A673 (cell line): ENCODE measurements at regions of chr22 and their contacts with region 1.

Region 1: DNA sequence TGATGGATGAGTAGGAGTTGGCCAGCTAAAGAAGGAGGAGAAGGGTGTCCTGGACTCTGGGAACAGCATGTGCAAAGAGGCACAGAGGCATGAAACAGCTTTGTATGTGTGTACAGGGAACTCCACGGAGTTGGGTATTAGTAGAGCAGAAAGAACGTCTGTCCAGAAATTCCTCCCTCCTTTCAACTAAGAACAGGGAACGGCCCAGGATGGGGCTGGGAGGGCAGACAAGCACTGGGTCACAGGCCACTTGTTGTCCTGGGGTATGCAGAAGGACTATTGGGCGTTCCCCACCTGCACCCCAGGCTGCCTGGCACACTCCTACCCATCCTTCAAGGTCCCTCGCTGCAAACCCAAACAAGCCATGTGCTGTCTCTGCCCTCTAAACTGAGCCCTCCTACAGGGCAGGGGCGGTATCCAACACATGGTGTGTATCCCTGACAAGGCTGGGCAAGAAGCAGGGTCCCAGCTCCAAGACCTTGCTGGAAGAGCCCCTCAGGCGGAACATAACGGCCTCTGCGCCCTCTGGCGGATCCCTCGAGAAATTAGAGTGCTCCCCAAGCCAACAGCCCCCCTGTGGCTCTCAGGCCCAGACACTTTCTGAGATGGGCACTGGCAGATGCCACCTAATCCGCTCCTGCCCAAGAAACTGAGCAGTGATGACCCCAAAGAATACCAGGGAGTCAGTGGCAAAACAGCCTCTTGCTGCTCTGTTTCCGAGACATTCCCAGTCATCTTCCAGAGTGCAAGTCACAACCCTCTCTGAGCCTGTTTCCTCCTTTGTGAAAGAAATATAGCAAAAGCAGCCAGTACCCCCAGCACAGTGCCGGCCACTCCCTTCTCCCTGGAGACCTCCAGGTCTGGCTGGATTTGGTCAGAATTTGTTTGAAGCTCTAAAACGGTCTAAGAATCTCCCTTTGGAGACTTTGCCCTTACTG is 1.6 kb upstream of the ELFN2 start:
- DNase-seq: peak; percentile 72
- H3K4me3 ChIP-seq: no peak overlapping the region
- H3K27ac ChIP-seq: no peak overlapping the region
- H3K4me1 ChIP-seq: no peaks in the 10 kb centered on the region
- H3K27me3 ChIP-seq: peaks cover 35% of the 10 kb centered on the region
- CTCF ChIP-seq: peak; percentile 88

Region 2: GRCh38 chr22:36741204-36741793 is 687.6 kb before region 1 on chr22:
- CTCF ChIA-PET with region 1: no interaction called
- POLR2A ChIA-PET with region 1: no interaction called
- intact Hi-C with region 1: no loop called
- DNase-seq: peak; percentile 50
- H3K4me3 ChIP-seq: no peak overlapping the region
- H3K27ac ChIP-seq: no peak overlapping the region
- H3K4me1 ChIP-seq: no peaks in the 10 kb centered on the region
- H3K27me3 ChIP-seq: peaks cover 27% of the 10 kb centered on the region
- CTCF ChIP-seq: no peak

Region 3: DNA sequence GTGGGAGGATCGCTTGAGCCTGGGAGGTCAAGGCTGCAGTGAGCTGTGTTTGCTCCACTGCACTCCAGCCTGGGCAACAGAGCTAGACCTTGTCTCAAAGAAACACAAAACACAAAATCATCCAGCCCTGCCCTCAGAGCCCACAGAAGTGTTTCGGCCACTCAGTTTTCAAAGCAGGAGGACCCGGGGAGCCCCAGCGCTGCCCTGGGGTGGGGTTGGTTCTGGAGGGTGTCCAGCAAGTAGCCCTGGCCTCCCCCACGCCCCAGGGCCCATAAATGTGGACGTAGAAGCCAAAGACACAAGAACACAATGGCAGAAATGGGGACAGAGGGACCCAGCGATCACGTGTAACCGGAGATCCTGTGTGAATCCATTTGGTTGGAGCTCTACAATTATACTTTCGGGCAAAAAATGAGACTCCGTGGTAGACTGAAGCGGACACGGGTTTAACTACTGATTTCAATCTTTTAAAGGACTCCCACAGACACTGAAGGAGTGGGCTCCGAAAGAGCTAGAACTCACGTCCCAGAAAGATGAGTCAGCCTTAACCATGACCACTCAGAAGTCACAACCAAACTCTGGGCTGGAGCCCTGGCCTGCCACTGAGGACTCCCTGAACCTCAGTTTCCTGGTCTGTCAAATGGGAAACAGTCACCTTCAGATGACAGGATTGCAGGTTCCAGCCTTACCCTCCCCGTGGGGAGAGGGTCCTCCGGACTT is 155.6 kb before region 1 on chr22:
- CTCF ChIA-PET with region 1: no interaction called
- POLR2A ChIA-PET with region 1: no interaction called
- intact Hi-C with region 1: loop called (anchors 10 kb)
- DNase-seq: no peak
- H3K4me3 ChIP-seq: no peak overlapping the region
- H3K27ac ChIP-seq: no peak overlapping the region
- H3K4me1 ChIP-seq: no peaks in the 10 kb centered on the region
- H3K27me3 ChIP-seq: peaks cover 12% of the 10 kb centered on the region
- CTCF ChIP-seq: no peak

Region 4: GRCh38 chr22:37316875-37317371 is 112.0 kb before region 1 on chr22:
- CTCF ChIA-PET with region 1: interaction called, 3 read pairs
- POLR2A ChIA-PET with region 1: no interaction called
- intact Hi-C with region 1: loop called (anchors 1 kb)
- DNase-seq: peak; percentile 74
- H3K4me3 ChIP-seq: no peak overlapping the region
- H3K27ac ChIP-seq: no peak overlapping the region
- H3K4me1 ChIP-seq: no peaks in the 10 kb centered on the region
- H3K27me3 ChIP-seq: no peaks in the 10 kb centered on the region
- CTCF ChIP-seq: peak; percentile 87

Region 5: GRCh38 chr22:37416827-37417226 is 12.1 kb before region 1 on chr22:
- CTCF ChIA-PET with region 1: no interaction called
- POLR2A ChIA-PET with region 1: no interaction called
- intact Hi-C with region 1: no loop called
- DNase-seq: no peak
- H3K4me3 ChIP-seq: no peak overlapping the region
- H3K27ac ChIP-seq: no peak overlapping the region
- H3K4me1 ChIP-seq: no peaks in the 10 kb centered on the region
- H3K27me3 ChIP-seq: peaks cover 33% of the 10 kb centered on the region
- CTCF ChIP-seq: no peak

Region 6: DNA sequence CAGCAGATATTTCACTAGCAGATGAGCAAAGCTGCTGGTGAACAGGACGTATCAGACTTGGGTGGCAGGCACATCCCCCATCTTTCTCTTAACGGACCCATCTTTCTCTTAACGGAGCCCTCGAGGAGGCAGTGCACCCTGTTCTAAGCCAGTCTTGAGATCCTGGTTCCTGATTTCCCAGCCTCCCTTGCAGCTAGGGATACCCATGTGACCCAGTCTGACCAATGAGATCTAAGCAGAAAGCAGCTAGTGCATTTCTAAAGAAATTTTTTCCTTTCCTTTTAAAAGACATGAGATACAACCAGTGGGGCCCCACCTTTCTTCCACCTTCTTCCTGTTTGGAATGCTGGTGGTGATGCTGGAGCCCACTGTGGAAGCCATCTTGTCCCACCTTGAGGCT is 12.0 kb after region 1 on chr22:
- CTCF ChIA-PET with region 1: interaction called, 10 read pairs
- POLR2A ChIA-PET with region 1: no interaction called
- intact Hi-C with region 1: no loop called
- DNase-seq: no peak
- H3K4me3 ChIP-seq: no peak overlapping the region
- H3K27ac ChIP-seq: no peak overlapping the region
- H3K4me1 ChIP-seq: no peaks in the 10 kb centered on the region
- H3K27me3 ChIP-seq: peaks cover 18% of the 10 kb centered on the region
- CTCF ChIP-seq: no peak